ENCODE measurements at regions of chr14 and their contacts with region 1.

Region 1: DNA sequence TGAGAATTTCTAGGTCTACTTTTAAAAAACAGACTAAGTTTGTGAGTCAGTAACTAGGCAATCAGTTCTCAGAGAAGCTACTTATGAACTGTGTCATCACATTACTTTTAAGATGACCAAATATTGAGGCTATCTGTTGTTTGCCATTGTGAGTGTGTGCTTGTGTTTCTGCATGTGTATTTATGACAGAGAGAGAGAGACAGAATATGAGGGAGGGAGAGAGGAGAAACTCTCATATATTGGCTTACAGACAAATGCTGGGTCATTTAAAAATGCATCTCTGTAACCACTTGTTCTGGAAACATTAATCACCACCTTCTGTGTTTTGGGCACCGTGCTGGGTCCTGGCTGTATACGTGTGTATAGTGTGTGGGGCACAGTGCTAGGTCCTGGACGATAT is 161.5 kb upstream of the FRMD6 start:
- DNase-seq: peak; percentile 67
- H3K4me3 ChIP-seq: peak overlapping the region; percentile 55 to 97 (median 85)
- H3K27ac ChIP-seq: peak overlapping the region; percentile 99
- H3K4me1 ChIP-seq: peaks cover 31% of the 10 kb centered on the region
- H3K27me3 ChIP-seq: no peaks in the 10 kb centered on the region
- CTCF ChIP-seq: no peak

Region 2: DNA sequence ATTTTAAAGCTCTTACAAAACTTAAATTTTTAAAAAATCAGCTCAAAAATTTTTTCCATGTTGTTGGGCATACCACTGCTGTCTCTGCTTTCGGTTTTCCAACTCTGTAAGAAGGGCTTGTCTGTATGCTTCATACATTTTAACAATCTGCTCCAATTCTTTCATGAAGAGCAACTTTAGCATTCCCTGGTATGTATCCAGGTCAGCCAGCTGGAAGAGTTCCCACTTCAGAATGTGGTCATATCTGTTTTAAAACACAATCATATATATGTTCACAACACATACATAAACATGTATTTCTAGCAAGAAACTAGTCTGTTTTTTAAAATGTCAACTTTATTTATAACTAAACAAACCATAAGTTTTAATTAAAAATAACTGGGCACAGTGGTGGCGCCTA is 855.1 kb before region 1 on chr14:
- CTCF ChIA-PET with region 1: no interaction called
- dilution Hi-C with region 1: no loop called
- in situ Hi-C with region 1: no loop called
- intact Hi-C with region 1: no loop called
- DNase-seq: no peak
- H3K4me3 ChIP-seq: no peak overlapping the region
- H3K27ac ChIP-seq: no peak overlapping the region
- H3K4me1 ChIP-seq: no peaks in the 10 kb centered on the region
- H3K27me3 ChIP-seq: no peaks in the 10 kb centered on the region
- CTCF ChIP-seq: no peak

Region 3: GRCh38 chr14:51239813-51240803 is 250.1 kb before region 1 on chr14 and contains the start of gene TMX1:
- CTCF ChIA-PET with region 1: no interaction called
- dilution Hi-C with region 1: no loop called
- in situ Hi-C with region 1: no loop called
- intact Hi-C with region 1: no loop called
- DNase-seq: peak; percentile 98
- H3K4me3 ChIP-seq: peak within 1 kb of the TSS; percentile 86 to 98 (median 94)
- H3K27ac ChIP-seq: peak within 1 kb of the TSS; percentile 70
- H3K4me1 ChIP-seq: peaks cover 3% of the 10 kb centered on the region
- H3K27me3 ChIP-seq: no peaks in the 10 kb centered on the region
- CTCF ChIP-seq: no peak
- total RNA-seq, gene TMX1: 39.7 to 53.8 TPM

Region 4: DNA sequence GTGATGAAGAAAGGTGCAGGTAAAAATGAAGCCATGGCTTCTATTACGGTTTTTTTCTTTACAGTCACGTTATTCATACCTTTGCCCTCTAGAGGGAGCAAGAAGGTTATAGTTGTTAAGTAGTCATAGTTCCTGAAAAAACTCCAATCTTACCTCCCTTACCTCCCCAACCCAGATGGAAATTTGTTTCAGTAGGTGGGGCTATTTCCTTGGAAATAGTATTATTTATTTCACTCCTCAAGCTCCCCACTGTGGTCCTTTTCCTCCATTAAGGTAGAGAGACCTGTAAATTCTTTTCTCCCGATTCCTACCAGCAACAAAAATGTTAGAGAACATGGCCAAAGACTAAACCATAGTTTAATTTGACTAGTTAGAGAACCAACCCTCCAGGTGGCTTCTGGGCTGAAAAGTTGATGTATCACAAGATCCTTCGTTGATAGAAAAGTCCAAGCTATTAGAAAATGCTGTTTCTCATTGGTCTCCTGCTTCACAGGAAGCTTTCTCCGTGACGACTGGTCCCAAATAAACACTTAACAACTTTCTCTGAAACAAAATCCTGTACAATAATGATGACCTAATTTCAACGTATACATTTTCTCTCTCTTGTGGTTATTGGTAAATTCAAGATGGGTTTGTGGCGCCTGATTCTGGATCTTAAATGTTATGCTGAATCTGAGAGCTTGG is 206.7 kb before region 1 on chr14:
- CTCF ChIA-PET with region 1: no interaction called
- dilution Hi-C with region 1: no loop called
- in situ Hi-C with region 1: no loop called
- intact Hi-C with region 1: loop called (anchors 1 kb)
- DNase-seq: peak; percentile 78
- H3K4me3 ChIP-seq: no peak overlapping the region
- H3K27ac ChIP-seq: no peak overlapping the region
- H3K4me1 ChIP-seq: peaks cover 9% of the 10 kb centered on the region
- H3K27me3 ChIP-seq: no peaks in the 10 kb centered on the region
- CTCF ChIP-seq: peak; percentile 67 to 84

Region 5: DNA sequence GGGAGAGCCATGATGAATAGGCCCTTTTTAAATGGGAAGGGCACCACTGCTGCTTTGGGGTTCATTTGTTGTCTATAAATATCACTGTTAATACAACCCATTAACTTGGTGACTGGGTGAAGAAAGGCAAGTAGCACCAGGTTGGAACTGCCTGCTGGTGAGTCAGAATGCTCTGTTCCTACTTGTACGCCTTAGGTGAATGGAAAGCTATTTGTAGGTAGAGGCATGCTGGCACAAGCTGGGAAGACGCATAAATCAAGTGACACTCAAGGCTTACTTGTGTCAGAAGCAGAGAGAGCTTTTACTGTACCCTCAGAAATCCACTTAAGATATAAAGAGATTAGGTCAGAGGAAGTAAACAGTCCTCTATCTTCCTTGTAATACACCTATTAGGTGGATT is 107.7 kb before region 1 on chr14:
- CTCF ChIA-PET with region 1: no interaction called
- dilution Hi-C with region 1: no loop called
- in situ Hi-C with region 1: no loop called
- intact Hi-C with region 1: loop called (anchors 1 kb)
- DNase-seq: peak; percentile 99
- H3K4me3 ChIP-seq: no peak overlapping the region
- H3K27ac ChIP-seq: peak overlapping the region; percentile 92
- H3K4me1 ChIP-seq: peaks cover 49% of the 10 kb centered on the region
- H3K27me3 ChIP-seq: no peaks in the 10 kb centered on the region
- CTCF ChIP-seq: no peak

Region 6: GRCh38 chr14:51442513-51443175 is 47.6 kb before region 1 on chr14:
- CTCF ChIA-PET with region 1: interaction called, 3 read pairs
- dilution Hi-C with region 1: no loop called
- in situ Hi-C with region 1: no loop called
- intact Hi-C with region 1: loop called (anchors 1 kb)
- DNase-seq: peak; percentile 94
- H3K4me3 ChIP-seq: peak overlapping the region in 1 of 3 experiments; percentile 1
- H3K27ac ChIP-seq: peak overlapping the region; percentile 89
- H3K4me1 ChIP-seq: peaks cover 41% of the 10 kb centered on the region
- H3K27me3 ChIP-seq: no peaks in the 10 kb centered on the region
- CTCF ChIP-seq: no peak

Region 7: DNA sequence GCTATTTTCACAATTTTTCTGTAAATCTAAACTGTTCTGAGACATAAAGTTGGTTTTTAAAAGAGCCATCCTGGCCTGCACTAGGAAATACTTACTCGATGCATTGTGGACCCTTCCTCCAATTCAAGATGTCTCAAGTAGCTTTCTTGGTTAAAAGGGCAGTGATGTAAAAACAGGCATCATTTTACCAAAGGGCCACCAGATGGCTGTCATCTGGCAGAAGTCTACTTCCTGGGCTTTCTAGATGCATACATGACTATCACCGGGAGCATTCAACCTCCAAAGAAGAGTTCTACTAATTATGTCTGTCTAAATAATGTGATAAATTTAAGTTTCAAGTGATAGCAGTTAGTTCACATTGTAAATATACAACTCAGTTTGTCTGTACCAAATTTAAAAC is 64.7 kb after region 1 on chr14:
- CTCF ChIA-PET with region 1: interaction called, 3 read pairs
- dilution Hi-C with region 1: no loop called
- in situ Hi-C with region 1: no loop called
- intact Hi-C with region 1: loop called (anchors 2 kb)
- DNase-seq: no peak
- H3K4me3 ChIP-seq: no peak overlapping the region
- H3K27ac ChIP-seq: peak overlapping the region; percentile 11
- H3K4me1 ChIP-seq: peaks cover 39% of the 10 kb centered on the region
- H3K27me3 ChIP-seq: no peaks in the 10 kb centered on the region
- CTCF ChIP-seq: no peak